Ovary (tissue), 10 donors: ENCODE measurements at regions of chr1 and their contacts with region 1.

Region 1: GRCh38 chr1:1291548-1292441 is 11.6 kb downstream of the SCNN1D start:
- DNase-seq: peak; percentile 68 to 83 (median 74)
- H3K4me3 ChIP-seq: no peak overlapping the region
- H3K27ac ChIP-seq: no peak overlapping the region
- H3K4me1 ChIP-seq: peaks cover 3% of the 10 kb centered on the region
- H3K27me3 ChIP-seq: no peaks in the 10 kb centered on the region
- CTCF ChIP-seq: peak; percentile 46 to 80 (median 48)
- EP300 ChIP-seq: no peak
- POLR2A ChIP-seq: no peak

Region 2: GRCh38 chr1:983799-984473 is 307.9 kb before region 1 on chr1:
- intact Hi-C with region 1: loop called in 2 of 4 experiments (anchors 10 kb)
- DNase-seq: peak in 4 of 5 donors; percentile 37 to 71 (median 62)
- H3K4me3 ChIP-seq: no peak overlapping the region
- H3K27ac ChIP-seq: no peak overlapping the region
- H3K4me1 ChIP-seq: no peaks in the 10 kb centered on the region
- H3K27me3 ChIP-seq: no peaks in the 10 kb centered on the region
- CTCF ChIP-seq: peak; percentile 33 to 80 (median 49)
- EP300 ChIP-seq: no peak
- POLR2A ChIP-seq: no peak

Region 3: GRCh38 chr1:1040004-1040991 is 251.5 kb before region 1 on chr1:
- intact Hi-C with region 1: loop called in 1 of 4 experiments (anchors 10 kb)
- DNase-seq: peak; percentile 61 to 79 (median 75)
- H3K4me3 ChIP-seq: peak overlapping the region; percentile 7
- H3K27ac ChIP-seq: no peak overlapping the region
- H3K4me1 ChIP-seq: peaks cover 6% of the 10 kb centered on the region
- H3K27me3 ChIP-seq: no peaks in the 10 kb centered on the region
- CTCF ChIP-seq: no peak
- EP300 ChIP-seq: no peak
- POLR2A ChIP-seq: no peak

Region 4: DNA sequence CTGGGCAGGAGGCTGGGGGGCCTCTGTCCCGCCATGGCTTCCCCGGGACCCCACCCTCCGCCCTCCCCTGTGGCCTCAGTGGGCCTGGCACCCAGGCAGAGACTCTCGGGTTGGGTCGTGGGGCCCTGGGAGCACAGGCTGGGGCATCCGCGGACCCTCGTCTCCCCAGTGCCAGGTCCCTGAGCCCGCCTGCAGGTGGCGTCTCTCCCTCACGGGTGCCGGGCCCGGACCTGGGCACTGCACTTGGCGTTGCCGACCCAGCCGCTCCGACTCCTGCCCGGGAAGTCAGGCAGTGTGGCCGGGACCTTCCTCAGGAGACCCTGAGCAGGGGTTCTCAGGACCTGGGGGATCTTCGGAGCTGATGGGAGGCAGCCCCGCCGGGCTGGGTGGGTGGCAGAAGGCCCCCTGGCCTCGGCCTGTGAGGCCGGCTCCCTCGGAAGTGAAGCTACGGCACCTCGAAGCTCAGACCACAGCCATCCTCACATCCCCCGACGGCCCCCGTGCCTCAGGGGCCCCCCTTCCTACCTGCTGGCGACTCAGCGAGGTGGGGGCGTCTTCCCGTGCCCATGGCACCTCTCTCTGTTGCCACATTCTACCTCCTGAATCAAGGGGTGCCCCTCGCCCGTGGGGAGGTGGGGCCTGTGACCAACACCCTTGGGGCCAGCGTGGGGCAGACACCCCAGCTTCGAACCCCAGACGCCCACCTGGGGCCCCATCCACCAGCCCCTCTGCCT is 169.6 kb before region 1 on chr1:
- intact Hi-C with region 1: loop called in 3 of 4 experiments (anchors 5 kb)
- DNase-seq: peak; percentile 55 to 81 (median 71)
- H3K4me3 ChIP-seq: no peak overlapping the region
- H3K27ac ChIP-seq: no peak overlapping the region
- H3K4me1 ChIP-seq: no peaks in the 10 kb centered on the region
- H3K27me3 ChIP-seq: no peaks in the 10 kb centered on the region
- CTCF ChIP-seq: peak in 2 of 3 donors; percentile 55 to 66
- EP300 ChIP-seq: no peak
- POLR2A ChIP-seq: no peak